WTC11 (cell line): ENCODE measurements at regions of chr5 and their contacts with region 1.

Region 1: GRCh38 chr5:163564321-163564938 is 59.0 kb downstream of the MAT2B start:
- DNase-seq: peak; percentile 57
- ATAC-seq: no peak
- H3K4me3 Mint-ChIP-seq: no peak overlapping the region
- H3K27ac Mint-ChIP-seq: no peak overlapping the region
- H3K4me1 Mint-ChIP-seq: peaks cover 68% of the 10 kb centered on the region
- H3K27me3 Mint-ChIP-seq: peaks cover 21% of the 10 kb centered on the region
- CTCF ChIP-seq: peak; percentile 86

Region 2: DNA sequence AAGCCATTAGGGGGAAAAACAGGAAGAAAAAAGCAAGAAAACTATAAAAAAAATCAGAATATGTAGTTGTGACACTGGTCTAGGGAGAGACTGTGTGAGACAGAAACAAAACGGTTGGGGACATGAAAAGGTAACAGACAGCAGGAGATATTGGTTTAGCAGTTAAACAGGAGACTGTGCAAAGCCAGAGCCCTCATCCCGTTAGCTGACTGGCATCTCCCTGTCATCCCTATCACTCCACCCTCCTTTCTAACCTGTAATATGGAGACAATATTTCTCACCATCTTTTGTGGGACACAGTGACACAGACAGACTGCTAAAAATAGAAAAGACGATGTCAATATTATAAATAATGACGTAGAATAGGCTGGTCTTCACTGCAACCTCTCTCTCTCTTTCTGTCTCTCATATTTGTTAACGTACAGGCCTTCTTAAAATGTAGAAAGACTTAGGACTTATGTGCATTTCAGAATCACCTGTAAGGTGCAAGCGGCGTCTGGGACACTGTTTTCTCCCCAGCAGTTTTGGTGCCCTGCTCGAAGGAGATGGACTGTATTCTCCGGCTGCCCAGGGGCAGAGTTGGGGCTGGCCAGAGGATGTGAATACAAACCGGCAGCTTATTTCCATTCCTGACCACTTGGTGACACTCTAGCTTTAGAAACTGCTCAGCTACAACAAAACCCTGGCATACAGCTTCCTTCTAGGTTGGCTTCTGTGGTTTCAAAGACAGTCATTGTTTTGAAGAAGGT is 131.6 kb after region 1 on chr5:
- CTCF ChIA-PET with region 1: interaction called, 15 read pairs
- POLR2A ChIA-PET with region 1: no interaction called
- DNase-seq: peak; percentile 53
- ATAC-seq: peak; percentile 99
- H3K4me3 Mint-ChIP-seq: no peak overlapping the region
- H3K27ac Mint-ChIP-seq: no peak overlapping the region; the same call in 1 of the 2 replicates
- H3K4me1 Mint-ChIP-seq: peaks cover 9% of the 10 kb centered on the region
- H3K27me3 Mint-ChIP-seq: no peaks in the 10 kb centered on the region
- CTCF ChIP-seq: 0 out of 2 replicates have a peak, but pooled peaks have one; percentile 27